ENCODE measurements at regions of chr17 and their contacts with region 1.

Region 1: DNA sequence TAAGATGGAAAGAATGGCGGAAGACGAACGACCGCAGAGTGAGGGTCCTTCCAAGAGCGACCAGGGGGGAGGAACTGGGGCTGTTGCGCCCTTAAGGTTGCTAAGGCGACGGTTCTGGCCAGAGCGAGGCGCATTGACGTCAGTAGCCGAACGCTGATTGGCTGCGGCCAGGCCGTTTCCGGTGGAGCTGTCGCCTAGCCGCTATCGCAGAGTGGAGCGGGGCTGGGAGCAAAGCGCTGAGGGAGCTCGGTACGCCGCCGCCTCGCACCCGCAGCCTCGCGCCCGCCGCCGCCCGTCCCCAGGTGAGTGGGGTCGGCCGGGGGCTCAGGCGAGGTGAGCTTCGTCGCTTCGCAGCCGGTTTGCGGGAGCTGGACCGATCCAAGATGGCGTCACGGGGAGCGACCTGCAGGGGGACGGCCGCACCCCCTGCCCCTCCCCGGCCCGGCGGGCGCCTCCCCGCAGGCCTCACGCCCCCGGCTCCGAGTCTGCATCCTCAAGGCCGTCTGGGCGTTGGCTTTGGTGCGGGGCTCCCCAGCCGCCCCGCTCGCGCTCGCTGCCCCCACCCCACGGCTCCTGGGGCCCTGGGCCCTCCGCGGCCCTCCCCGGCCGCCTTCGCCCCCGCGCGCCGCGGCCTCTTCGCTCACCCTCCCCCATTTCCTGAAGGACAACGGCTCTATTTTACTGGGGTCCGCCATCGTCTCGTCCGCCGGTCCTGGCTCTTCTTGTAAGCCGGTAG is at the start of gene PRKAR1A:
- DNase-seq: peak; percentile 92
- ATAC-seq: peak; percentile 77
- H3K4me3 Mint-ChIP-seq: peak within 1 kb of the TSS; percentile 100
- H3K27ac Mint-ChIP-seq: peak within 1 kb of the TSS; percentile 100
- H3K4me1 Mint-ChIP-seq: peaks cover 39% of the 10 kb centered on the region
- H3K27me3 Mint-ChIP-seq: no peaks in the 10 kb centered on the region
- CTCF ChIP-seq: no peak
- total RNA-seq, gene PRKAR1A: 272 and 279 TPM in 2 replicates

Region 2: GRCh38 chr17:67717624-67718329 is 794.6 kb before region 1 on chr17 and contains the start of gene NOL11:
- CTCF ChIA-PET with region 1: no interaction called
- POLR2A ChIA-PET with region 1: interaction called, 9 read pairs
- intact Hi-C with region 1: loop called (anchors 1 kb)
- DNase-seq: peak; percentile 98
- ATAC-seq: peak; percentile 94
- H3K4me3 Mint-ChIP-seq: peak within 1 kb of the TSS; percentile 100
- H3K27ac Mint-ChIP-seq: peak within 1 kb of the TSS; percentile 99
- H3K4me1 Mint-ChIP-seq: peaks cover 30% of the 10 kb centered on the region
- H3K27me3 Mint-ChIP-seq: no peaks in the 10 kb centered on the region
- CTCF ChIP-seq: no peak
- total RNA-seq, gene NOL11: 67.9 and 70.6 TPM in 2 replicates

Region 3: DNA sequence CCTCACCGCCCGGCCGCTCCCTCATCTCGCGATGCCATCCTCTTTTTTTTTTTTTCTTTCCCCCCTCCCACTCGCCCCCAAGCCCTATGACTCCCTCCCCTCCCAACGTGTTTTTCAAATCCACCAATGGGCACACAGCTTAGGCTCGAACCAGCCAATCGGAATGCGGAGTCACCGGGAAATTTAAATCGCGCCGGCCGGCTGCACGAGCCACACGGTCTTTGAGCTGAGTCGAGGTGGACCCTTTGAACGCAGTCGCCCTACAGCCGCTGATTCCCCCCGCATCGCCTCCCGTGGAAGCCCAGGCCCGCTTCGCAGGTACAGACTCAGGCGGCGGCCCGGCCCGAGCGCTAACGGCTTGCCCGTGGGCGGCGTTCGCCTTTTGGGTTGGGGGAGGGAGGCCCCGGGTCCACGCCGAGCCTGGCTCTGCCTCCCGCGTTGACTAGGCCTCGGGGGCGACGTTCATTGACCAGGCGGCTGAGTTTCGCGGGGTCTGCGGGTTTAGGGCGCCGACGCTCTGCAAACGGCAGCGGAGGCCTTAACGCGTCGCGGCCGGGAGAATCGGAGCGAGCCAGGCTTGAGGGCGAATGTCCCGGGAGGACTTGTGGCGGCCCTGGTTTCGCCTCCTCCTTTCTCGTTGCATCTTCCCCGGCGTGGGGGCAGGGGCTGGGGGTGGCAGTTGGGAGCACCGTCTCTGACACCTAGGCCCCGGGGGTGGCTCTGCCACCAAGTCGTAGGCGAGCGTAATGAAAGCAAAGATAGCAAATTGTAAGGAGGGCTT is 476.7 kb before region 1 on chr17 and contains the start of gene KPNA2:
- CTCF ChIA-PET with region 1: no interaction called
- POLR2A ChIA-PET with region 1: no interaction called
- intact Hi-C with region 1: loop called (anchors 1 kb)
- DNase-seq: peak; percentile 80
- ATAC-seq: peak; percentile 89
- H3K4me3 Mint-ChIP-seq: peak within 1 kb of the TSS; percentile 93
- H3K27ac Mint-ChIP-seq: peak within 1 kb of the TSS; percentile 92
- H3K4me1 Mint-ChIP-seq: peaks cover 11% of the 10 kb centered on the region
- H3K27me3 Mint-ChIP-seq: no peaks in the 10 kb centered on the region
- CTCF ChIP-seq: no peak
- total RNA-seq, gene KPNA2: 49.5 and 49.9 TPM in 2 replicates

Region 4: DNA sequence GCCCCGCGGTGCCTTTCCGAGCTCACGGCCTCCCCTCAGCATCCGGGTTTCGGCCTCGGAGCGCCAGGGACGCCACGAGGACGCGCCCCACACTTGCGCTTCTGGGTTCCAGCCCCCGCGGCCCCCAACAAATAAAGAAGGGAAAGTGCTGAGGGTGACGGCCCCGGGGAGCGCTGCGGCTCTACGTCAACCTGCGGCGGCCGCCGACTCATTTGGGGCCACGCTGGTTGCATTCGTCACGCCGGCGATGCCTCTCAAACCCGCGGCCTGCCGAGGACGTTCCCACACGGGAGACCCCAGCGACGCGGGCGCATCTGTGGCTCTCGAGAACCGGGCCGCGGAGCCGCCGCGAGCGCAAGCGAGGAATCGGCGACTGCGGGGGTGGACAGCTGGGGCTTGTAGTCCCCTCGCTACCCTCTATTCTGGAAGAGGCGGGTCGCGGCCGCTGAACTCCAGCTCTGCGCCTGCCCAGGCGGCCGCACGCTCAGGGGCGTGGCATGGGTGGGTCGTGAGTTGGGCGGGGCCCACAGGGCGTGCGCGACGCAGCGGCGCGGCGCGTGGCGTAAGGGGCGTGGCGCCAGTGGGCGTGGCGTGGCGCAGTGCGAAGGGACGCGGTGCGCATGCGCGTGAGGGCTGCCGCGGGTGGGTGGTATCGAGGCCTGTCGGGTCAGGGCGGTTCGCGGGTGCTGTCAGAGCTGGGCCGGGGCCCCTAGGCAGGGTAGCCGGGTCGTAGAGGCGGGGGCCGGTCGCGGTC is 264.8 kb before region 1 on chr17 and contains the start of gene AMZ2:
- CTCF ChIA-PET with region 1: no interaction called
- POLR2A ChIA-PET with region 1: no interaction called
- intact Hi-C with region 1: loop called (anchors 5 kb)
- DNase-seq: peak; percentile 100
- ATAC-seq: peak; percentile 87
- H3K4me3 Mint-ChIP-seq: peak within 1 kb of the TSS; percentile 92
- H3K27ac Mint-ChIP-seq: peak within 1 kb of the TSS; percentile 95
- H3K4me1 Mint-ChIP-seq: peaks cover 53% of the 10 kb centered on the region
- H3K27me3 Mint-ChIP-seq: no peaks in the 10 kb centered on the region
- CTCF ChIP-seq: no peak
- total RNA-seq, gene AMZ2: 42.1 and 55.4 TPM in 2 replicates

Region 5: GRCh38 chr17:68368387-68368786 is 144.0 kb before region 1 on chr17:
- CTCF ChIA-PET with region 1: no interaction called
- POLR2A ChIA-PET with region 1: no interaction called
- intact Hi-C with region 1: no loop called
- DNase-seq: no peak
- ATAC-seq: no peak
- H3K4me3 Mint-ChIP-seq: no peak overlapping the region
- H3K27ac Mint-ChIP-seq: no peak overlapping the region
- H3K4me1 Mint-ChIP-seq: no peaks in the 10 kb centered on the region
- H3K27me3 Mint-ChIP-seq: no peaks in the 10 kb centered on the region
- CTCF ChIP-seq: no peak

Region 6: GRCh38 chr17:68497885-68498319 is 14.5 kb before region 1 on chr17:
- CTCF ChIA-PET with region 1: interaction called, 7 read pairs
- POLR2A ChIA-PET with region 1: interaction called, 102 read pairs
- intact Hi-C with region 1: loop called (anchors 1 kb)
- DNase-seq: no peak
- ATAC-seq: peak; percentile 91
- H3K4me3 Mint-ChIP-seq: peak overlapping the region; percentile 62
- H3K27ac Mint-ChIP-seq: peak overlapping the region; percentile 90
- H3K4me1 Mint-ChIP-seq: peaks cover 41% of the 10 kb centered on the region
- H3K27me3 Mint-ChIP-seq: no peaks in the 10 kb centered on the region
- CTCF ChIP-seq: no peak

Measured in activated B cell treated with CpG ODN at 0.5 μM for 24 hours (primary cell).